CD4-positive, alpha-beta memory T cell (primary cell): ENCODE measurements at regions of chr5 and their contacts with region 1.

Region 1: GRCh38 chr5:108681079-108681921 is 66.4 kb upstream of the FER start:
- DNase-seq: peak; percentile 27 to 47 (median 43)
- H3K4me3 ChIP-seq: no peak overlapping the region
- H3K4me3 Mint-ChIP-seq: no peak overlapping the region
- H3K27ac ChIP-seq: no peak overlapping the region
- H3K27ac Mint-ChIP-seq: no peak overlapping the region
- H3K4me1 ChIP-seq: no peaks in the 10 kb centered on the region
- H3K4me1 Mint-ChIP-seq: no peaks in the 10 kb centered on the region
- H3K27me3 ChIP-seq: no peaks in the 10 kb centered on the region
- H3K27me3 Mint-ChIP-seq: peaks cover 4 to 11% of the 10 kb centered on the region in 2 donors

Region 2: GRCh38 chr5:108919591-108920326 is 238.5 kb after region 1 on chr5:
- CTCF ChIA-PET with region 1: no interaction called
- POLR2A ChIA-PET with region 1: no interaction called
- intact Hi-C with region 1: loop called (anchors 5 kb)
- DNase-seq: peak in 1 of 5 donors; percentile 6
- H3K4me3 ChIP-seq: no peak overlapping the region
- H3K4me3 Mint-ChIP-seq: no peak overlapping the region
- H3K27ac ChIP-seq: no peak overlapping the region
- H3K27ac Mint-ChIP-seq: no peak overlapping the region
- H3K4me1 ChIP-seq: no peaks in the 10 kb centered on the region
- H3K4me1 Mint-ChIP-seq: peaks cover 0 to 5% (median 4%) of the 10 kb centered on the region in 4 donors
- H3K27me3 ChIP-seq: no peaks in the 10 kb centered on the region
- H3K27me3 Mint-ChIP-seq: no peaks in the 10 kb centered on the region

Region 3: GRCh38 chr5:109589986-109590385 is 908.7 kb after region 1 on chr5:
- CTCF ChIA-PET with region 1: no interaction called
- POLR2A ChIA-PET with region 1: no interaction called
- intact Hi-C with region 1: no loop called
- DNase-seq: peak in 4 of 5 donors; percentile 10 to 24 (median 20)
- H3K4me3 ChIP-seq: no peak overlapping the region
- H3K4me3 Mint-ChIP-seq: no peak overlapping the region
- H3K27ac ChIP-seq: no peak overlapping the region
- H3K27ac Mint-ChIP-seq: no peak overlapping the region
- H3K4me1 ChIP-seq: no peaks in the 10 kb centered on the region
- H3K4me1 Mint-ChIP-seq: no peaks in the 10 kb centered on the region
- H3K27me3 ChIP-seq: no peaks in the 10 kb centered on the region
- H3K27me3 Mint-ChIP-seq: no peaks in the 10 kb centered on the region